CD4-positive, alpha-beta memory T cell (primary cell): ENCODE measurements at regions of chr12 and their contacts with region 1.

Region 1: GRCh38 chr12:108562348-108563135 is at the start of gene ISCU:
- DNase-seq: peak; percentile 97 to 100 (median 99)
- H3K4me3 ChIP-seq: peak within 1 kb of the TSS; percentile 87 to 90
- H3K4me3 Mint-ChIP-seq: peak within 1 kb of the TSS; percentile 100
- H3K27ac ChIP-seq: peak within 1 kb of the TSS; percentile 96
- H3K27ac Mint-ChIP-seq: peak within 1 kb of the TSS; percentile 99 to 100 (median 100)
- H3K4me1 ChIP-seq: peaks cover 65% of the 10 kb centered on the region
- H3K4me1 Mint-ChIP-seq: peaks cover 34 to 79% (median 54%) of the 10 kb centered on the region in 4 donors
- H3K27me3 ChIP-seq: no peaks in the 10 kb centered on the region
- H3K27me3 Mint-ChIP-seq: no peaks in the 10 kb centered on the region
- total RNA-seq, gene ISCU: 182 to 195 TPM

Region 2: DNA sequence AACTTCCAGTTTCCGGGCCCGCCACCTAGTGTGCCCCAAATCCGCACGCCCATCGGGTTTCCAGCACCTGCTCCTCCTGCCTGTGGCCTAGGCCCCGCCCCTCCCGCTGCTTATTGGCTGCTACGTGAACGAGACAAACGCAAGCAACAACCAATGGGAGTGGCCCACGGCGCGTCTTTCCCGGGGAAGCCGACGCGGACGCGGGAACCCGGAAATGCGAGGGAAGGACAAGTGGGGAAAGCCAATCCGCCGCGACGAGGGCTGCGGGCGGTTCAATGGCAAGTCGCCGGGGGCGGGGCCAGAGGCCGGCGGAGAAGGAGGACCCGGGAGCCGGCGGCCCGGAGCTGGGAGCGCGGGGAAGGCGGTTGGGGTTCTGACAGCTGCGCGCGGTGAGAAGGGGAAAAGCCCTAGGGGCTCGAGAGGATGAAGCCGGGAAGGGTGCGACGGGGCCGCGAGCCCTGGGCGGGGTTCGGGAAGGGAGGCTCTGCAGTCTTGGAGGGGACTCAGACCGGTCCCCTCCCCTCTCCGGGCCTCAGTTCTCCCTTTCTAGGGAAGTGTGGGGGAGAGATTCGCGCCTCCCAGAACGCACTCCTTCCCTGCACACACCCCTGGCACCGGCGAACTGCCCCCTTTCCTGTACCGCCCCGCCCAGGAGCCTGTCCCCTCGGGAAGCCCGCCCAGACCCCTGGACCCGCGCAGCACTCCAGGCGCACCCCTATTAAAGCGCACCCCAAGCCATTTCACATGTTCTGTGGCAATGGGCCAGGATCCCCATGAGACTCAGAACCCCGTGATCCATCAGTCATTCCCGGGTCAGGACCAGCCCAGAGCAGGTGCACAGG is 47.3 kb before region 1 on chr12 and contains the start of gene FICD:
- CTCF ChIA-PET with region 1: interaction called, 5 read pairs
- POLR2A ChIA-PET with region 1: interaction called, 8 read pairs
- intact Hi-C with region 1: loop called (anchors 1 kb)
- DNase-seq: peak; percentile 98 to 100 (median 99)
- H3K4me3 ChIP-seq: peak within 1 kb of the TSS; percentile 84 to 90
- H3K4me3 Mint-ChIP-seq: peak within 1 kb of the TSS; percentile 91 to 97 (median 94)
- H3K27ac ChIP-seq: peak within 1 kb of the TSS; percentile 86
- H3K27ac Mint-ChIP-seq: peak within 1 kb of the TSS; percentile 90 to 97 (median 95)
- H3K4me1 ChIP-seq: peaks cover 27% of the 10 kb centered on the region
- H3K4me1 Mint-ChIP-seq: peaks cover 16 to 42% (median 28%) of the 10 kb centered on the region in 4 donors
- H3K27me3 ChIP-seq: no peaks in the 10 kb centered on the region
- H3K27me3 Mint-ChIP-seq: peaks cover 1% of the 10 kb centered on the region in 2 donors
- total RNA-seq, gene FICD: 10.6 to 12.3 TPM

Region 3: GRCh38 chr12:108633534-108634248 is 71.1 kb after region 1 on chr12 and contains the start of gene SELPLG:
- CTCF ChIA-PET with region 1: interaction called, 50 read pairs
- POLR2A ChIA-PET with region 1: interaction called, 245 read pairs
- intact Hi-C with region 1: loop called (anchors 1 kb)
- DNase-seq: peak; percentile 91 to 97 (median 94)
- H3K4me3 ChIP-seq: peak within 1 kb of the TSS; percentile 92 to 95
- H3K4me3 Mint-ChIP-seq: peak within 1 kb of the TSS; percentile 94 to 100 (median 99)
- H3K27ac ChIP-seq: peak within 1 kb of the TSS; percentile 92
- H3K27ac Mint-ChIP-seq: peak within 1 kb of the TSS; percentile 99 to 100 (median 100)
- H3K4me1 ChIP-seq: peaks cover 65% of the 10 kb centered on the region
- H3K4me1 Mint-ChIP-seq: peaks cover 40 to 84% (median 54%) of the 10 kb centered on the region in 4 donors
- H3K27me3 ChIP-seq: no peaks in the 10 kb centered on the region
- H3K27me3 Mint-ChIP-seq: no peaks in the 10 kb centered on the region
- total RNA-seq, gene SELPLG: 175 to 176 TPM

Region 4: GRCh38 chr12:108691175-108691997 is 128.8 kb after region 1 on chr12:
- CTCF ChIA-PET with region 1: no interaction called
- POLR2A ChIA-PET with region 1: interaction called, 12 read pairs
- intact Hi-C with region 1: no loop called
- DNase-seq: peak; percentile 33 to 83 (median 38)
- H3K4me3 ChIP-seq: peak overlapping the region in 1 of 2 donors; percentile 56
- H3K4me3 Mint-ChIP-seq: peak overlapping the region; percentile 48 to 85 (median 78)
- H3K27ac ChIP-seq: peak overlapping the region; percentile 27
- H3K27ac Mint-ChIP-seq: peak overlapping the region; percentile 77 to 90 (median 86)
- H3K4me1 ChIP-seq: peaks cover 46% of the 10 kb centered on the region
- H3K4me1 Mint-ChIP-seq: peaks cover 37 to 66% (median 54%) of the 10 kb centered on the region in 4 donors
- H3K27me3 ChIP-seq: no peaks in the 10 kb centered on the region
- H3K27me3 Mint-ChIP-seq: no peaks in the 10 kb centered on the region

Region 5: DNA sequence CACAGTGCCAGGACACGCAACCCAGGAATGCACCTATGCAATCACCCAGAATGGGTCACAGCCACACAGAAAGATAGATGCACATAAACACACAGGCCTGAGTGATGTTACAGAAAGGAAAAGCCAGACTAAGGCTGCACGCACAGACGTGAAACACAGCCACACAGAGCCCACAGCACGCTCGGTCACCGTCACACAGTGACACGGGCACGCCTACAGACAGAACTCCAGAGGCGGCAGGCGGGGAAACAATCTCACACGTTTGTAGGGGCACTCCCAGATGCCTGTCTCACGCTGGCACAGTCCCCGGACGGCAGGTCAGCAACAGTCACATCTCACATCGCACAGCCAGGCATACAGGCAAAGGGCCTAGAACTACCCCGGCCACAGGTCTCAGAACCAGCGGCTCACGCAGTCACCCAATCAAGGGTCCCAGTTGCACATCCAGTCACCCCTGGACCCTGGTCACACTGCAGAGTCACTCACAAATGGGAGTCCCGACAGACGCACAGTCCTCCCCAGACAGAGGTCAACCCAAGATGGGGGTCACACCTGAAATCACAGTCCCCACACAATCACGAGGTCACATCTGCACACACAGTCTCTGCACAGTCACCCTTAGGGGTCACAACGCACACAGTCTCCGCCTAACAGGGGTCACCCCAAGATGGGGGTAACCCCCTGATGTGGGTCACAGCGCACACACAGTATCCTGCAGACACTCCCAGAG is 294.1 kb after region 1 on chr12:
- CTCF ChIA-PET with region 1: no interaction called
- POLR2A ChIA-PET with region 1: interaction called, 11 read pairs
- intact Hi-C with region 1: loop called (anchors 1 kb)
- DNase-seq: peak; percentile 52 to 87 (median 59)
- H3K4me3 ChIP-seq: peak overlapping the region; percentile 54 to 74
- H3K4me3 Mint-ChIP-seq: peak overlapping the region; percentile 93 to 98 (median 96)
- H3K27ac ChIP-seq: peak overlapping the region; percentile 67
- H3K27ac Mint-ChIP-seq: peak overlapping the region; percentile 83 to 99 (median 96)
- H3K4me1 ChIP-seq: peaks cover 30% of the 10 kb centered on the region
- H3K4me1 Mint-ChIP-seq: peaks cover 30 to 45% (median 38%) of the 10 kb centered on the region in 4 donors
- H3K27me3 ChIP-seq: no peaks in the 10 kb centered on the region
- H3K27me3 Mint-ChIP-seq: no peaks in the 10 kb centered on the region

Region 6: GRCh38 chr12:109093022-109093918 is 530.7 kb after region 1 on chr12 and contains the start of gene ALKBH2:
- CTCF ChIA-PET with region 1: interaction called, 5 read pairs
- POLR2A ChIA-PET with region 1: interaction called, 6 read pairs
- intact Hi-C with region 1: loop called (anchors 1 kb)
- DNase-seq: peak; percentile 93 to 98 (median 95)
- H3K4me3 ChIP-seq: peak within 1 kb of the TSS; percentile 62 to 75
- H3K4me3 Mint-ChIP-seq: peak within 1 kb of the TSS; percentile 84 to 91 (median 86)
- H3K27ac ChIP-seq: peak within 1 kb of the TSS; percentile 60
- H3K27ac Mint-ChIP-seq: peak within 1 kb of the TSS; percentile 86 to 97 (median 95)
- H3K4me1 ChIP-seq: peaks cover 27% of the 10 kb centered on the region
- H3K4me1 Mint-ChIP-seq: peaks cover 21 to 56% (median 34%) of the 10 kb centered on the region in 4 donors
- H3K27me3 ChIP-seq: no peaks in the 10 kb centered on the region
- H3K27me3 Mint-ChIP-seq: no peaks in the 10 kb centered on the region
- total RNA-seq, gene ALKBH2: 12.9 to 14.4 TPM